ENCODE measurements at regions of chr2 and their contacts with region 1.

Region 1: DNA sequence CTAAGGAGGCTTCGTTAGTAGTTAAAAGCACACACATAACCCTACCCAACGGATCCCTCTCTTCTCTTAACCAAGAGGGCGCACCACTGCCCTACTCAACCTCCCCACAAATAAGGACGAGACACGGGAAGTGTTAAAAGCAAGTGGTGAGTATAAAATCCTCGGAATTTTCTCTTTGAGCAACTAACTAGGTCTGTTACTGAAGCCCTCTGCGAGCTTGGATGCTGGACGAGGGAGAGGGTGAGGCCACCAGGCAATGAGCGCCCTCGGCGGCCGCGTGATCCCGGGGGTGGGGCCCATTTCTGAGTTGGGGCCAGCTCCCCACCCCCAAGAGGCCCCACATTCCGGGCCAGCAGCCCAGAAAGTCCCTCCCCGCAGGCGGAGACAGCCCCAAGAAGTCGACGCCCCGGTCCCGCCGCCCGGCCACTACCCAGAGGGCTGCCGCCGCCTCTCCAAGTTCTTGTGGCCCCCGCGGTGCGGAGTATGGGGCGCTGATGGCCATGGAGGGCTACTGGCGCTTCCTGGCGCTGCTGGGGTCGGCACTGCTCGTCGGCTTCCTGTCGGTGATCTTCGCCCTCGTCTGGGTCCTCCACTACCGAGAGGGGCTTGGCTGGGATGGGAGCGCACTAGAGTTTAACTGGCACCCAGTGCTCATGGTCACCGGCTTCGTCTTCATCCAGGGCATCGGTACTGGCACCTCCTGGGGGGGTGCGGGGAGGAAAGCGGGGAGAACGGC is at the start of gene CYBRD1:
- DNase-seq: peak in 1 of 2 experiments; percentile 80
- H3K4me3 ChIP-seq: peak within 1 kb of the TSS; percentile 73 to 96 (median 84)
- H3K27ac ChIP-seq: peak within 1 kb of the TSS; percentile 65
- H3K4me1 ChIP-seq: peaks cover 7 to 21% (median 12%) of the 10 kb centered on the region in 4 experiments; a peak in 5 of 7 replicates
- H3K27me3 ChIP-seq: no peaks in the 10 kb centered on the region
- CTCF ChIP-seq: peak in 1 of 3 experiments; percentile 12; a peak in 1 of 4 replicates
- EP300 ChIP-seq: no peak
- POLR2A ChIP-seq: peak in 1 of 2 experiments; percentile 56; a peak in 2 of 3 replicates
- RAD21 ChIP-seq: 0 out of 4 replicates have a peak, but pooled peaks of 1 of the 2 experiments have one; percentile 3
- total RNA-seq, gene CYBRD1: 12.6 and 14.9 TPM in 2 replicates

Region 2: GRCh38 chr2:171491292-171491691 is 30.9 kb before region 1 on chr2:
- CTCF ChIA-PET with region 1: interaction called, 3 read pairs
- POLR2A ChIA-PET with region 1: interaction called, 10 read pairs
- DNase-seq: peak in 1 of 2 experiments; percentile 59
- H3K4me3 ChIP-seq: no peak overlapping the region
- H3K27ac ChIP-seq: no peak overlapping the region
- H3K4me1 ChIP-seq: peaks cover 0 to 4% (median 1%) of the 10 kb centered on the region in 4 experiments; a peak in 3 of 7 replicates
- H3K27me3 ChIP-seq: no peaks in the 10 kb centered on the region
- CTCF ChIP-seq: peak in 2 of 3 experiments; percentile 31 to 53; a peak in 2 of 4 replicates
- EP300 ChIP-seq: no peak
- POLR2A ChIP-seq: no peak
- RAD21 ChIP-seq: peak; percentile 44 to 51; a peak in 3 of 4 replicates

Region 3: GRCh38 chr2:171509945-171510731 is 12.1 kb before region 1 on chr2:
- CTCF ChIA-PET with region 1: interaction called, 13 read pairs
- POLR2A ChIA-PET with region 1: interaction called, 28 read pairs
- DNase-seq: no peak
- H3K4me3 ChIP-seq: no peak overlapping the region
- H3K27ac ChIP-seq: no peak overlapping the region
- H3K4me1 ChIP-seq: peaks cover 0 to 4% (median under 1%) of the 10 kb centered on the region in 4 experiments; a peak in 4 of 7 replicates
- H3K27me3 ChIP-seq: no peaks in the 10 kb centered on the region
- CTCF ChIP-seq: no peak
- EP300 ChIP-seq: no peak
- POLR2A ChIP-seq: no peak
- RAD21 ChIP-seq: no peak